Endothelial cell of umbilical vein (primary cell): ENCODE measurements at regions of chr3 and their contacts with region 1.

Region 1: GRCh38 chr3:58824285-58824684 is 157.7 kb upstream of the FAM3D start:
- DNase-seq: peak; percentile 78
- H3K4me3 ChIP-seq: no peak overlapping the region
- H3K27ac ChIP-seq: no peak overlapping the region
- H3K4me1 ChIP-seq: no peaks in the 10 kb centered on the region
- H3K27me3 ChIP-seq: no peaks in the 10 kb centered on the region
- CTCF ChIP-seq: peak; percentile 70 to 74
- POLR2A ChIP-seq: no peak

Region 2: DNA sequence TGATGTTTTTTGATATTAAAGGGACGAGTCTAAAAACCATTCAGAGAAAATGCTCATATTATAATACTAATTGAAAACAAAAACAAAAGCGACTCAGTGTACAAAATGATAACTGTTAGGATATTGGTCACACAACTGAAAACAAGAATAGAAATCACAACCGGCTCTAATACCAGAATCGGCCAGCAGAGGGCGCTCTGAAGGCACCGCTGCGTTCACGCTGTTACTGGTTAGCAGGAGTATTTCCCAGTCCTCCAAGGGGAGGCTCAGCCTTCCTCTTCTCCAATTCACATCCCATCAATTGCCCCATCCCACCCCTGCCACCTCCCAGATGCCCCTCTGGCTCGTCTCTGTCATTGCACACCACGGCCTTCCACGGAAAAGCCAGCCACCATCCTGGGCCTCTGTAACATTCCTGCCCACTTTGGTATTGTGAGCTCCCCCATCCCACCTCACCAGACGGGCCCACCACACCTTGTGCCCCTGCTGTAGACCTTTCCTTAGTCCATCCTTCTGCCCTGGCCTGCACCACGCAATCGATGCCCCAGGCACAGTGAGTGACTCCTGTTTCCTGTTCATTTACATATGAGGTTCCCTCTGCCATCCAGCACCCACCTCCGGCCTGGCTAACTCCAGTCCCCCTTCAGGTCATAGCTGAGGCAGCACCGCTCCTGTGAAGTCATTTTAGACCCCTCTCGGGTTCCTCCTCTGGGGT is 255.6 kb before region 1 on chr3:
- CTCF ChIA-PET with region 1: no interaction called
- POLR2A ChIA-PET with region 1: no interaction called
- dilution Hi-C with region 1: no loop called
- intact Hi-C with region 1: loop called (anchors 10 kb)
- DNase-seq: peak; percentile 83
- H3K4me3 ChIP-seq: no peak overlapping the region
- H3K27ac ChIP-seq: no peak overlapping the region
- H3K4me1 ChIP-seq: peaks cover 24% of the 10 kb centered on the region
- H3K27me3 ChIP-seq: no peaks in the 10 kb centered on the region
- CTCF ChIP-seq: peak; percentile 84 to 88
- POLR2A ChIP-seq: no peak

Region 3: GRCh38 chr3:58994746-58995330 is 170.6 kb after region 1 on chr3:
- CTCF ChIA-PET with region 1: interaction called, 19 read pairs
- POLR2A ChIA-PET with region 1: no interaction called
- dilution Hi-C with region 1: no loop called
- intact Hi-C with region 1: loop called (anchors 1 kb)
- DNase-seq: peak; percentile 60
- H3K4me3 ChIP-seq: no peak overlapping the region
- H3K27ac ChIP-seq: no peak overlapping the region
- H3K4me1 ChIP-seq: peaks cover 19% of the 10 kb centered on the region
- H3K27me3 ChIP-seq: no peaks in the 10 kb centered on the region
- CTCF ChIP-seq: peak; percentile 59 to 71
- POLR2A ChIP-seq: no peak

Region 4: DNA sequence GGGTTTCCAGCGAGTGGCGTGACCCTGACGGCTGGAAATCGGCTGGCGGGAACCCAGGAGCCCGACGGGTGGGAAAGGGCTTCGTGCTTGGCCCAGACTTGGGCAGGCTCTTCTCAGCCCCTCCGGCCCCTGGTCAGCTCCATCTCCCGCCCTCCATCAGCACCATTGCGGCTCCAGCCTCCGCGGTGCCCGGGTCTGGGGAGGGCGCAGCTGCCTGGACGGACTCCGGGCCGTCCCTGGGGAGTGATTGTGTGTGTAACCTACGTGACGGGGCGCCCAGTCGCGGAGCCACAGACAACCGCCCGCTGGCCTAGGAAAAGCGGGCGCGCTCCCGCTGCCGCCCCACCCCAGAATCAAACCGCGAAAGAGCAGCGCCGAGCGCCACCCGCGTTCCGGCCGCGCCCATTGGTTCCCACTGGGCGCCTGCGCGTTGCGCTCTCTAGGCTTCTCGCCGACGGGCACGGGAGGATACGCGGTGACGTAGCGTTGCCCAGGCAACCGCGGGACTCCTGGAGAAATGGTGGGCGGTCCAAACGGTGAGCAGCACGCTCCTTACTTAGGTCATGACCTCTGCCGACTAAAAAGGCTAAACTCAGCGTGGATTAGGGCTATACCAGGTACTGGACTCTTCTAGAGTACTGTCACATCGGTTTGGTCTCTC is 225.5 kb after region 1 on chr3 and contains the start of gene CFAP20DC:
- CTCF ChIA-PET with region 1: interaction called, 168 read pairs
- POLR2A ChIA-PET with region 1: no interaction called
- dilution Hi-C with region 1: no loop called
- intact Hi-C with region 1: loop called (anchors 1 kb)
- DNase-seq: peak; percentile 92
- H3K4me3 ChIP-seq: peak within 1 kb of the TSS; percentile 34 to 53 (median 51)
- H3K27ac ChIP-seq: peak within 1 kb of the TSS; percentile 37
- H3K4me1 ChIP-seq: peaks cover 6% of the 10 kb centered on the region
- H3K27me3 ChIP-seq: no peaks in the 10 kb centered on the region
- CTCF ChIP-seq: no peak
- POLR2A ChIP-seq: peak; percentile 93
- total RNA-seq, gene CFAP20DC: 1.9 and 2.1 TPM in 2 replicates

Region 5: GRCh38 chr3:59212128-59212779 is 388.0 kb after region 1 on chr3:
- CTCF ChIA-PET with region 1: no interaction called
- POLR2A ChIA-PET with region 1: no interaction called
- dilution Hi-C with region 1: no loop called
- intact Hi-C with region 1: loop called (anchors 1 kb)
- DNase-seq: peak; percentile 44
- H3K4me3 ChIP-seq: no peak overlapping the region
- H3K27ac ChIP-seq: no peak overlapping the region
- H3K4me1 ChIP-seq: peaks cover 9% of the 10 kb centered on the region
- H3K27me3 ChIP-seq: peaks cover 3 to 8% of the 10 kb centered on the region in 2 experiments
- CTCF ChIP-seq: peak; percentile 36 to 41
- POLR2A ChIP-seq: no peak

Region 6: GRCh38 chr3:59857589-59858346 is 1033.5 kb after region 1 on chr3:
- CTCF ChIA-PET with region 1: interaction called, 22 read pairs
- POLR2A ChIA-PET with region 1: no interaction called
- dilution Hi-C with region 1: no loop called
- intact Hi-C with region 1: loop called (anchors 1 kb)
- DNase-seq: peak; percentile 58
- H3K4me3 ChIP-seq: no peak overlapping the region
- H3K27ac ChIP-seq: no peak overlapping the region
- H3K4me1 ChIP-seq: no peaks in the 10 kb centered on the region
- H3K27me3 ChIP-seq: no peaks in the 10 kb centered on the region
- CTCF ChIP-seq: peak; percentile 79 to 89
- POLR2A ChIP-seq: no peak